ENCODE measurements at regions of chr9 and their contacts with region 1.

Region 1: GRCh38 chr9:97921959-97922724 is at the start of gene TRMO:
- DNase-seq: peak; percentile 99
- ATAC-seq: peak; percentile 96
- total RNA-seq, gene TRMO: 6.5 TPM

Region 2: DNA sequence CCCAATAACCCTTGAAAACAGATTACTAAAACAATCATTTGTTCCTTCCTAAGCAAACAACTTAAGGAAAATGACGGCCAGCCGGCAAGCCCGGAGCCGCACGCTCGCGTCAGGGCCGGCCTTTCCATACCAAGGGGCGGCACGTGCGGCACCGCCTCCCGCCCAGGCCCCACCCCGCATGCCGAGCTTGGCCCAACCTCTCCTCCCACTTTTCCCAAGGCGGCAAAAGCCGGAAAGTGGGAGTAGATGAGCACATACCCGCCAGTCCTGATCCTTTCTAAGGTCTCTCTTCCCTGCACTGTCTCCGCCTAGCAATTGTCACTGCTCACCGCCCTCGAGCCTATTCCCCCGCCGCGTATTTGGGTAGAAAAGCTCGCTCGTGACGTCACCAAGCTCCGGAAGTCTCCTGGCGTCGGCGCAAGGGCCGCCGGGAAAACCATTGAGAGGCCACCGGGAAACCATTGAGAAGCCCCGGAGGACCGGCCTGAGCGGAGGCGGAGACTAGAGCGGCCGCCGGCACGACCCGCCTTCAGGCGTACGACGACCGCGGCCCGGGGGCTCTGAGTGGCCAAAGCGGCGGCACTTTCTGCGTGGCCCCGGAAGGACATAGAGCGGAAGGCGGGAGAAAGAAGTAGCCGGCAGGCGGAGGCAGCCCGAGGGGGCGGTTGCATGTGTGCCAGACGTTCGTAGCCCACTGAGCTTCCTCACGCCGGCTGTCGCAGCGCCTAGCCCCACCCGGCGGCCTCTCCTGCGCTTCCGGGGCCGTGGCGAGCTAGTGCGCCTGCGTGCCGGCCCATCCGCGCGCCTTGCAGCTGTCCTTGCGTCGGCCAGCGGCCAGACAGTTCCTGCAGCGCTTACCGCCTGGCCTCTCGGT is 288.9 kb before region 1 on chr9 and contains the starts of genes NCBP1 and TSTD2:
- intact Hi-C with region 1: loop called (anchors 5 kb)
- DNase-seq: peak; percentile 99
- ATAC-seq: peak; percentile 95
- total RNA-seq, gene NCBP1: 20.0 TPM
- total RNA-seq, gene TSTD2: 24.8 TPM

Region 3: GRCh38 chr9:98037357-98037756 is 115.2 kb after region 1 on chr9:
- intact Hi-C with region 1: loop called (anchors 2 kb)
- DNase-seq: no peak
- ATAC-seq: peak; percentile 91

Region 4: GRCh38 chr9:98207606-98208005 is 285.5 kb after region 1 on chr9:
- intact Hi-C with region 1: loop called (anchors 10 kb)
- DNase-seq: no peak
- ATAC-seq: no peak

Region 5: DNA sequence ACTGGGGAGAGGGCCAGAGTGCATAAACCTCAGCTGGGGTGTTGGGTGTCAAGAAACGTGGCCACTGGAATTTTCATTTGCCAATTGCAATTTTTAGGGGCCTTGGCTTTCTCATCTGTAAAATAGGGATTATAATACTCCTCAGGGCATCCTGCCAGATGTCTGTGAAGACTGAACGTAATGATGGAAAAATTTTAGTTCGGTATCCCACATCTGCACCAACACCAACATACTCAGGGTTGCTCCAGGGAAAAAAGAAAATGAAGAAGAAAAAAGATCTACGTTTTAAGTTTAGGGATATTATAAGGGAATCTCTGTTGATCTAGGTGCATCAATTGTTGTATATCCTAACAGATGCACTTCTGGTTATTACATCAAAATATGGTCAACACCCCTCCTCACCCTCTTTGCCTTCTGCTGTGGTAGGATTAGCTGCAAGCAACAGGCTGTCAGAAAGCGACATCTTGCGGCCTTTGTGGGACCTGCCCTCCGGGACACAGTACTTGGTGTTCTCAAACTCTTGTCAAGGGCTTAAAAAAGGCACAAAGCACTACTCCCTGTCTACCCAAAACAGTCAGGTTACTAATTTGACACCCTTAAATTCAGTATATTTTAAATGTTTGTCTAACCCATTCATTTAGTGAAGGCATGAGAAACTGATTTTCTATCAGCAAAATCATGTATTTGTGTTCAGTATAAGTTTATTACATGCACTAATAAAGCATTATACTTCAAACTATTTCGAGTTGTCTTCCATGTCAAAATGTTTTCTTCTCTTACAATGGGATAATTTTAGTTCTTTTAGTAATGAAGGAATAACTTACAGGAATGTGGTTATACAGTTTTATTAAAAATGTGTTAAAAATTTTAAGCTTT is 341.6 kb after region 1 on chr9:
- intact Hi-C with region 1: loop called (anchors 1 kb)
- DNase-seq: peak; percentile 84
- ATAC-seq: peak; percentile 88